ENCODE measurements at regions of chr14 and their contacts with region 1.

Region 1: GRCh38 chr14:23006544-23007419 is 3.2 kb downstream of the C14orf93 start:
- DNase-seq: peak; percentile 99
- H3K4me3 Mint-ChIP-seq: peak overlapping the region; percentile 94
- H3K27ac Mint-ChIP-seq: peak overlapping the region; percentile 96
- H3K4me1 Mint-ChIP-seq: peaks cover 33% of the 10 kb centered on the region
- H3K27me3 Mint-ChIP-seq: no peaks in the 10 kb centered on the region

Region 2: GRCh38 chr14:22737052-22737451 is 269.7 kb before region 1 on chr14:
- CTCF ChIA-PET with region 1: no interaction called
- POLR2A ChIA-PET with region 1: no interaction called
- intact Hi-C with region 1: no loop called
- DNase-seq: peak; percentile 76
- H3K4me3 Mint-ChIP-seq: no peak overlapping the region
- H3K27ac Mint-ChIP-seq: peak overlapping the region; percentile 63
- H3K4me1 Mint-ChIP-seq: peaks cover 16% of the 10 kb centered on the region
- H3K27me3 Mint-ChIP-seq: no peaks in the 10 kb centered on the region

Region 3: GRCh38 chr14:22994762-22995275 is 12.0 kb before region 1 on chr14:
- CTCF ChIA-PET with region 1: interaction called, 39 read pairs
- POLR2A ChIA-PET with region 1: interaction called, 6 read pairs
- intact Hi-C with region 1: no loop called
- DNase-seq: peak; percentile 40
- H3K4me3 Mint-ChIP-seq: no peak overlapping the region
- H3K27ac Mint-ChIP-seq: no peak overlapping the region
- H3K4me1 Mint-ChIP-seq: peaks cover 3% of the 10 kb centered on the region
- H3K27me3 Mint-ChIP-seq: no peaks in the 10 kb centered on the region

Region 4: DNA sequence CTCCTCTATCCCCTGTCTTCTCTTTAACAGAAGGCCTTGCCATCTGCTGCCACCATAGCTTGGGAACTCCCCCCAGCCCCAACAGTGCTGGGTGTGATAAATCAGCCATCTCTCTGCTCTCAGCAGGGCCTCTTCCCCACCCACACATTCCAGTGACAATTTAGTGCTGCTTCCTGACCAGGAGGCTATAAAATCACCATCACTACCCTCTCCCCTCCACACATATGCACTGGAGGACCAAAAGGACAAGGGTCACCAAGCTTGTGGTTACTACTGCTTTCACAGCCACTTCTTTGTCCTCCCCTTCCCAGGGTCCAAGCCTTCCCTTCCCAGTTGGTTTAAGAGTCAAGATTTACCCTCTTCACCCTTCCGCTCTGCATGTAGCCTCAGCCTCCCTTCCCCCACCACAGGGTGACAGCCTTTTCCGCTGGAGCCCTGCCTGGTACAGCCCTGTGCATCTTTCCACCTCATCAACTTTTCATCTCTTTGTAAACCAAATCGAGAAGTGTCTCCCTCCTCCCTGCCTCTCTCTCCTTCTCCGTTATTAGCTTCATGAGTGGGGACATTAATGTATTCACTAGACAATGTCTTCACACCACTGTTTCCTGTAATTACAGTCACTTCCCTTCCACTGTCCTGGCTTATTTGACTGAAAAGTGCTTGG is 18.5 kb after region 1 on chr14:
- CTCF ChIA-PET with region 1: interaction called, 6 read pairs
- POLR2A ChIA-PET with region 1: interaction called, 6 read pairs
- intact Hi-C with region 1: loop called (anchors 1 kb)
- DNase-seq: peak; percentile 53
- H3K4me3 Mint-ChIP-seq: peak overlapping the region; percentile 9
- H3K27ac Mint-ChIP-seq: peak overlapping the region; percentile 81
- H3K4me1 Mint-ChIP-seq: peaks cover 47% of the 10 kb centered on the region
- H3K27me3 Mint-ChIP-seq: no peaks in the 10 kb centered on the region

Region 5: DNA sequence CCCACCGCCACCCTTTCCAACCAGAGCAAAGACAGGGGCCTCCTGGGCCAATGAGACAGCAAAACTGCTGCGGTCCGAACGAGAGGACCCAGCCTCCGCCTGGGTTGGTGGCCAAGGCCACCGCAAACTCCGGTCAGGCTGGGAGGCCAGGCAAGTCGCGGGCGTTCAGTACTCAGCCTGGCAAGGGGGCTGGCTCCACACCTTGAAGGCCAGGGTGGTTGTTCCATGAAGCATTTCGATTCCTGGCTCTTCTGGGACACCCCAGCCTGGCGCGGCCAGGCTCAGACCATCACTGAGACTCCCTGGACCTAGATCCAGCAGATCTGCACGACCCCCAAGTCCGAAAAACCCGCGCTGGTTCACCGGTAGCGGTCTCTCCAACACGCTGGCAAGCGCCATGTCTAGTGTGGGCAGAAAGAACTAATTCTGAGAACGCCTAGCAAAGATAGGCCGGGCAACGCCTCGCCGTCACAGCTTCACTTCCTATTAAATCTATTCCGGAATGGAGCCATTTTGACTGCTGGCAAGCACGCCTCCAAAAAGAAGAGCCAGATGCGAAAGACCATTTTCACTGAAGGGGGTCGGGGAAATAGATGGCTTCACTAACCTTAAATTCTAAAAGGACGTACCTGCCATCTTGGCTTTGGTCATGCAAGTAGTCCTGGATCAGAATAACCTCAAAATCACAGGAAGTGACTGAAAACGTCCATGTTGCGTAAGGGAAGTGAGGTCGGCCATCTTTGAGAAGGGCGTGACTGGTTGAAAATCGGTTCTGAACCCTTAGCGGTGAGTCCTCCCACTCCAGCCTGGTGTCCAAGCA is 27.9 kb after region 1 on chr14 and contains the start of gene PSMB5:
- CTCF ChIA-PET with region 1: interaction called, 9 read pairs
- POLR2A ChIA-PET with region 1: interaction called, 37 read pairs
- intact Hi-C with region 1: loop called (anchors 1 kb)
- DNase-seq: peak; percentile 94
- H3K4me3 Mint-ChIP-seq: peak within 1 kb of the TSS; percentile 95
- H3K27ac Mint-ChIP-seq: peak within 1 kb of the TSS; percentile 95
- H3K4me1 Mint-ChIP-seq: peaks cover 28% of the 10 kb centered on the region
- H3K27me3 Mint-ChIP-seq: no peaks in the 10 kb centered on the region
- total RNA-seq, gene PSMB5: 116 to 119 TPM

Region 6: GRCh38 chr14:23095196-23096108 is 88.7 kb after region 1 on chr14 and contains the start of gene C14orf119:
- CTCF ChIA-PET with region 1: interaction called, 3 read pairs
- POLR2A ChIA-PET with region 1: interaction called, 11 read pairs
- intact Hi-C with region 1: loop called (anchors 1 kb)
- DNase-seq: peak; percentile 100
- H3K4me3 Mint-ChIP-seq: no peak within 1 kb of the TSS
- H3K27ac Mint-ChIP-seq: no peak within 1 kb of the TSS
- H3K4me1 Mint-ChIP-seq: peaks cover 40% of the 10 kb centered on the region
- H3K27me3 Mint-ChIP-seq: no peaks in the 10 kb centered on the region
- total RNA-seq, gene C14orf119: 58.0 to 62.8 TPM

Region 7: DNA sequence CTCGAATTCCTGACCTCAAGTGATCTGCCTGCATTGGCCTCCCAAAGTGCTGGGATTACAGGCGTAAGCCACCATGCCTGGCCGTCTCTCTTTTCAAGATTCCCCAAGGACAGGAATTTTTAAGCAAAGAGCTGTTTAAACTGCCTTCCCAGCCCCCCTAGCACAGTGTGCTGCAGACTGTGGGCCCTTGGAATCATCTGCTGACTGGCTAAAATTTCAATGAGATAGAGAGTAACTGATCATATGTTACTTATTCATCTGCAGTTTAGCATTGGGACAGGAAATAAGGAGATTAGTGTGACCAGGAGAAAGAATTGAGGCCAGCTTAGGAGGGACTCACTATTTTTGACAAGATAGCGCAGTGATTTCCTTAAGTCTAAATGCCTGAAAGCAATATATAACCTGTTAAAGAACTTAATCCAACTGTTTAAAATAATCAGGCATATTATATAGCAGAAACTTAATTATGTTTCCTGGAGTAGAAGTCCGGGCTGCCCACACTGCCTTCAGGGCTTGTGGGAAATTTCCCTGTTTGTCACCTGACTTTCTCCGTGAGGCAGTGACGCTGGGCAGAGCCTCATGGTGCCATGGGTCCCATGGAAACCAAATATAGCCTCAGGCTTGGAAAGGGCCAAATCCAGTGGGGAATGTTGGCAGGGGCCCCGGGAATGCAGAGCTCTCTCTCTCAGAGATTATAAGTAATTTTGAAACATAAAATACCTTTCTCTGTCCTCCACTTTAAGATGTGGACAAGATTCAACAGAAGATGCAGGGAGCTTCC is 135.1 kb after region 1 on chr14:
- CTCF ChIA-PET with region 1: no interaction called
- POLR2A ChIA-PET with region 1: no interaction called
- intact Hi-C with region 1: no loop called
- DNase-seq: no peak
- H3K4me3 Mint-ChIP-seq: no peak overlapping the region
- H3K27ac Mint-ChIP-seq: no peak overlapping the region
- H3K4me1 Mint-ChIP-seq: no peaks in the 10 kb centered on the region
- H3K27me3 Mint-ChIP-seq: no peaks in the 10 kb centered on the region

Measured in activated CD4-positive, alpha-beta memory T cell treated with anti-CD3 and anti-CD28 coated beads for 36 hours (primary cell).